ENCODE measurements at regions of chr14 and their contacts with region 1.

Region 1: GRCh38 chr14:59438195-59438647 is 27.0 kb downstream of the GPR135 start:
- DNase-seq: no peak
- H3K4me3 ChIP-seq: no peak overlapping the region
- H3K27ac ChIP-seq: no peak overlapping the region
- H3K4me1 ChIP-seq: no peaks in the 10 kb centered on the region
- H3K27me3 ChIP-seq: no peaks in the 10 kb centered on the region
- CTCF ChIP-seq: no peak
- POLR2A ChIP-seq: no peak

Region 2: DNA sequence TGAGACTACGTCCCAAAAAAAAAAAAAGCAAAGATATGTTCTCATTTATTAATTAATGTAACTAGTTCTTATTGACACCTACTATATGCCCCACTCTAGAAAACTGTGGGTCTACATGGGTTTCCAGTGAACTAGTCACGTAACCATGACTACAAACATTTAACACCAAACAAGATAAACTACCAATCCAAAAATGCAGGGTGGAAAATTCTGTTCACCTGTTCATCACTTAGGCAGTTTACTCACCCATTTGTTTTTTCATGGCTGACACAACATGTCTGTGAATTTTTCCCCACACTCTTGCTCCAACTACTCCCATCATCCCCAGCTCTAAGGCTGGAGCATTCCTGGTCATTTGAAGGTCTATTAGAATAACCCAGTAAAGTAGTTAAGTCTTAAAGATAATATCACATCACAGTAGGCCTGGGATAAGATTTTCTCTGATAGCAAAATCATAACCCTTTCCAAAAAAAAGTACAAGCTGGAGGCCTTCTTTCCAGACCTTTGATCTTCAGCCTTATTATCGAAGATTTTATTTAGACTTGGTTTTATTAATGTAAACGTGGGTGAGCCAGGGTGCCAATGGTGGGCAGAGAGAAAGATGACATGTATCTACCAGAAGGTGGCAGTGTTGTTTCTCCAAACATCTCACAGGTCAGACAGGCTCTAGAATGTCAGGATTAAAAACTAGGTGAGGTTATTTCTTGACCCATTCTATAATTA is 311.4 kb before region 1 on chr14:
- intact Hi-C with region 1: loop called in 1 of 2 experiments (anchors 2 kb)
- DNase-seq: peak; percentile 16 to 57 (median 25)
- H3K4me3 ChIP-seq: no peak overlapping the region
- H3K27ac ChIP-seq: no peak overlapping the region
- H3K4me1 ChIP-seq: no peaks in the 10 kb centered on the region
- H3K27me3 ChIP-seq: peaks cover 4% of the 10 kb centered on the region
- CTCF ChIP-seq: peak; percentile 42 to 93 (median 84)
- POLR2A ChIP-seq: no peak

Region 3: GRCh38 chr14:59139324-59139723 is 298.9 kb before region 1 on chr14:
- intact Hi-C with region 1: loop called in 1 of 2 experiments (anchors 5 kb)
- DNase-seq: no peak
- H3K4me3 ChIP-seq: no peak overlapping the region
- H3K27ac ChIP-seq: no peak overlapping the region
- H3K4me1 ChIP-seq: no peaks in the 10 kb centered on the region
- H3K27me3 ChIP-seq: no peaks in the 10 kb centered on the region
- CTCF ChIP-seq: no peak
- POLR2A ChIP-seq: no peak

Region 4: GRCh38 chr14:59377991-59378601 is 60.1 kb before region 1 on chr14:
- intact Hi-C with region 1: loop called in 1 of 2 experiments (anchors 5 kb)
- DNase-seq: peak in 2 of 7 donors; percentile 20 to 55
- H3K4me3 ChIP-seq: no peak overlapping the region
- H3K27ac ChIP-seq: peak overlapping the region in 3 of 5 donors; percentile 8 to 73 (median 55)
- H3K4me1 ChIP-seq: peaks cover 0 to 6% of the 10 kb centered on the region in 2 donors
- H3K27me3 ChIP-seq: no peaks in the 10 kb centered on the region
- CTCF ChIP-seq: no peak
- POLR2A ChIP-seq: no peak

Region 5: GRCh38 chr14:59474172-59474571 is 36.0 kb after region 1 on chr14:
- intact Hi-C with region 1: no loop called
- DNase-seq: no peak
- H3K4me3 ChIP-seq: no peak overlapping the region
- H3K27ac ChIP-seq: no peak overlapping the region
- H3K4me1 ChIP-seq: no peaks in the 10 kb centered on the region
- H3K27me3 ChIP-seq: no peaks in the 10 kb centered on the region
- CTCF ChIP-seq: no peak
- POLR2A ChIP-seq: no peak

Measured in adrenal gland (tissue), 19 donors.